Common myeloid progenitor, CD34-positive (primary cell): ENCODE measurements at regions of chr3 and their contacts with region 1.

Region 1: DNA sequence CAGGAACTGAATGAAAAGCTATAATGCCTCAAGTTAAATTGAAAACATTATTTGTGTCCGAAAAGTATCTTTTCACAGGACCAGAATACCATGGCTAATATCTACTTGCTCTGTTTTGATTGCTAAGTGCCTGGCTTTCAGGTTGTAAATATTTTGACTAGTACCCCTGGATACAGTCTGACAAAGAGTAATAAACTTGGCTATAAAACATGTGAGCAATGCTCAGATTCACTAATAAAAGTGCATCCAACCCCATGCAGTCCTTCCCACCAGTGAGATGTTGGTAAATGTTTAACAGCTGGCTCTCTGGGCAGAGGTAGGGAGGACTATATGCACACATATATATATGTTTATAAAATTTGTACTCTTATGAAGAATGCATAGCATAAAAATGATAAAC is 281.8 kb upstream of the TGFBR2 start:
- DNase-seq: no peak
- H3K4me3 ChIP-seq: no peak overlapping the region
- H3K27ac ChIP-seq: no peak overlapping the region
- H3K4me1 ChIP-seq: no peaks in the 10 kb centered on the region
- H3K27me3 ChIP-seq: no peaks in the 10 kb centered on the region

Region 2: DNA sequence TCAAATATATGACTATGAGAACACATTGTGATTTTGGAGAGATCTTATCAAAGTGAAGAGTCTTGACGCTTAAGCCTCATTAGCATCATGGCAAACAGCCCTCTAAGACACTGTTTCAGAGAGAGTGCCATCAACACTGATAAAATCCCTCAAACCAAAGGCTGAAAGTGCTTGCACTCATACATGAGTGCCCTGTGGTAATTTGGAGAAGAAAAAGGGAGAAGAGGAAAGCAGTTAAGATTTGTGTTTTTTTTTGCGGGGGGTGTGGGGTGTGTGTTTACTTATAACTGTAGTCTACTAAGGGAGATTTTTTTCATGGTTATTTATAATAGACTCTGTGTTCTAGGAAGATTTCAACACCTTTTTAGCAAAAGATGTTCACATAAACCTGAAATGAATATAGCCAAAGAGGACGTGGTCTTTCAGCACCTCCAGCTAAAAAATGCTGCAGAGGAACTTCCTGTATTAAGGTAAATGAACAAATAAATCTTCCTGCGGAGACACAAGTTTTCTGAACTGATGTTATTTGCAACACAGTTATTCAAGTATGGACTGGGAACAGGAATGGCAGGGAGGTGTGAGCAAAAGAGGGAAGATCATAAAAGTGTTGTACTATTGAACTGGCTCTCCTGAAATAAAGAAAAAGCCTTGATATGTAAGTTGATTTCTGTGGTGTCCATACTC is 199.9 kb after region 1 on chr3:
- CTCF ChIA-PET with region 1: no interaction called
- POLR2A ChIA-PET with region 1: no interaction called
- DNase-seq: peak; percentile 19 to 62 (median 60)
- H3K4me3 ChIP-seq: no peak overlapping the region
- H3K27ac ChIP-seq: no peak overlapping the region
- H3K4me1 ChIP-seq: peaks cover 0 to 10% (median 6%) of the 10 kb centered on the region in 4 experiments
- H3K27me3 ChIP-seq: no peaks in the 10 kb centered on the region

Region 3: GRCh38 chr3:30614373-30614772 is 289.8 kb after region 1 on chr3:
- CTCF ChIA-PET with region 1: no interaction called
- POLR2A ChIA-PET with region 1: interaction called, 12 read pairs
- DNase-seq: no peak
- H3K4me3 ChIP-seq: no peak overlapping the region
- H3K27ac ChIP-seq: no peak overlapping the region
- H3K4me1 ChIP-seq: peaks cover 32 to 85% (median 63%) of the 10 kb centered on the region in 4 experiments
- H3K27me3 ChIP-seq: no peaks in the 10 kb centered on the region